ENCODE measurements at regions of chr11 and their contacts with region 1.

Region 1: DNA sequence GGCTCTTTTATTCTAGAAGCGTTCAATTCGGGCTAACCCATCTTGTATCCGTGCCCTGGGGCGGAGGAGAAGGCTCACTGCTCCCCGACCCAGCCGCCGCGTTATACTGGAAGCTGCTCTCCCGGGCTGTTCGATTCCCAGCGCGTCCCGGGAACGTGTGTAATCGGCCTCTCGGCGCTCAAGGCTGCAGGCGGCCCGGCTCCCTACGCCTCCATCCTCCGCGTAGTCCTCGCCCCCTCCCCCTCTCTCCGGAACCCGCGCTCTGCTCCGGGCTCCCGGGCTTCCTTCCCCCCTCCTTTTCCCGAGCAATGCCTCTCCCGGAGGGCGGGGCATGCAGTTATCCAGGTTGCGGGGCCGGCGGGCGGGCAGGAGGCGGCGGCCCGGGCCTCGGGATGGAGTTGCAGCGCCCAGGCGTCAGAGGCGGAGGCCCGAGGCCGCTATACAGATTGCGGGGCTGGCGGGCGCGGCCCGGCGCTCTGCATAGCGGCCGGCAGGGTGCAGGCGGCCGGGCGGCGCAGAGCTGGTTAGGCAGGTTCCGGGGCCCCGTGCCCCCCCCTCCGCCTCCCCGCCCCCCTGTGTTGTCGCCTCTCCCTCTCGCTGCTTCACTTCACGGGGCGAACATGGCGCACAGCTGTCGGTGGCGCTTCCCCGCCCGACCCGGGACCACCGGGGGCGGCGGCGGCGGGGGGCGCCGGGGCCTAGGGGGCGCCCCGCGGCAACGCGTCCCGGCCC is at the start of gene KMT2A:
- DNase-seq: peak; percentile 86 to 98
- H3K4me3 ChIP-seq: peak within 1 kb of the TSS; percentile 73 to 91
- H3K27ac ChIP-seq: peak within 1 kb of the TSS; percentile 95 to 96
- H3K4me1 ChIP-seq: peaks cover 3 to 18% of the 10 kb centered on the region in 2 donors
- H3K27me3 ChIP-seq: no peaks in the 10 kb centered on the region
- CTCF ChIP-seq: peak in 1 of 3 experiments; percentile 99
- total RNA-seq, gene KMT2A: 61.3 TPM

Region 2: DNA sequence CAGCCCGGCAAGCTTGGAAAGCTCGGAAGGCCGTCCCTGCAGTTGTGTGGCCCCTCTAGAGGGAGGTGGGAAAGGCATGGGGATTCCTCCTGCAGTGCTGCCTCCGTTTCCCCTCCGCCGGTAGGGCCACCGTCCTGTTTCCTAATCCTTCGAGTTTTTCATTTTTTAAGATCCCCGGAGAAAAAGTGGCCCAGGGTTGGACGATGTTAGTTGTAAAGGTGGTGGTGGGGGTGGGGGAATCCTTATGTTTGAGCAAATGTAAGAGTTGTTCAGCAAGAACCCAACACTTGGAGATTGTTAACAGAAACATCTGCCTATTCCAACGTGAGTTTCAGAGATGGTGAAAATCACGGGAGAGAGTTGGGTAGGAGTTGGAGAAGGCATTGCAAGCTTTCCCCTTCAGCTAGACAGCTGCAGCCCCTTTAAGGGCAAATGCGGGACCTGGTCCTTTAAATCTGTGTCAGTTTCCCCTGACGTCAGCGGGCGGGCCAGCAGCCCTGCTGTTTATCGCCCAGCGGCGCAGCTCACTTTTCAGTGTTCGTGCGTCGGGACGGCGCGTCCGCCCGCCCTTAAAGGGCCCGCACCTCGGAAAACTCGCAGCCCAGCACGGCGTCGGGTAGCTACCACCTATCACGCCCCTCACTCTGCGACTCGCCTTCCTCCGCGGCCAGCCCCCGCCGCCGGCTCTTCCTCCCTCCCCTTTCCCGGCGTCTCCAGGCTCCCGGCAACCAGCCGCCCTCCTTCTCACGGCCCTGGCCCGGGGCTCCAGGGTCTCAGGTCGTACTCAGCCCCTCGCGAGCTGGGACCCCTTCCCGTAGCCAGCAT is 1257.6 kb before region 1 on chr11 and contains the start of gene SIDT2:
- intact Hi-C with region 1: loop called (anchors 5 kb)
- DNase-seq: peak; percentile 79 to 97
- H3K4me3 ChIP-seq: peak within 1 kb of the TSS; percentile 84 to 97
- H3K27ac ChIP-seq: peak within 1 kb of the TSS; percentile 98 to 99
- H3K4me1 ChIP-seq: peaks cover 14 to 28% of the 10 kb centered on the region in 2 donors
- H3K27me3 ChIP-seq: no peaks in the 10 kb centered on the region
- CTCF ChIP-seq: peak in 1 of 3 experiments; percentile 7
- total RNA-seq, gene SIDT2: 45.4 TPM

Region 3: GRCh38 chr11:118380571-118380970 is 55.5 kb before region 1 on chr11:
- intact Hi-C with region 1: no loop called
- DNase-seq: no peak
- H3K4me3 ChIP-seq: no peak overlapping the region
- H3K27ac ChIP-seq: no peak overlapping the region
- H3K4me1 ChIP-seq: no peaks in the 10 kb centered on the region
- H3K27me3 ChIP-seq: no peaks in the 10 kb centered on the region
- CTCF ChIP-seq: no peak

Region 4: DNA sequence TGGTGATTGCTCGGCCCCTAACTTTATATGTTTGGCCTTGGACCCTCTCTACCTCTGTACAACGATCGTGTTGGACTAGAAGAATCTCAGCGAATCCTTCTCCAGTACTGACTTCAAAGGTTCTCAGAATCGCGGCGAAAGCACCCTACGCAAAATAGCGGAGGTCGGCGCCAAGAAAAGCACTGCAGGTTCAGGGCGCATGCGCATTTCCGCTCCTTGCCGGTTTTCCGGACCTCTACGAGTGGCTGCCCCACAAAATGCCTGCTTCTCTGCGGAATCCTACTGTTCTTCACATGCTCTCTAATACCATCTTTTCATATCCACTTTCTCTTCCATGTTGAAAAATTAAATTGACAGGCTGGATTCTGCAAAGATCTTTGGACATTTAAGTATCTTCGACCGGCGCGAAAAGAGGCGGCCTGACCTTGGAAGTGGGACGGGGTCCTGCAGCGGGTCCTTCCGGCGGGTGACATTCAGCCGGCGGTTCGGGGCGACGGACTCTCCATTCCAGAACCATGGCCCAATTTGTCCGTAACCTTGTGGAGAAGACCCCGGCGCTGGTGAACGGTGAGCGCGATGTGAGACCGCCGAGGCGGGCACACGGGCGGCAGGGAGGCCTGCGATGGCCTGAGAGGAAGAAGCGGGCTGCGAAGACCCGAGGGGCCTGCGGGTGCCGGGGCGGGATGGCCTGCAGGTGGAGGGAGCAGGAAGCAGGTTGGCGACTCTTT is 34.7 kb before region 1 on chr11 and contains the start of gene ATP5MG:
- intact Hi-C with region 1: loop called (anchors 1 kb)
- DNase-seq: peak; percentile 13 to 93
- H3K4me3 ChIP-seq: peak within 1 kb of the TSS; percentile 81 to 99
- H3K27ac ChIP-seq: peak within 1 kb of the TSS; percentile 69 to 84
- H3K4me1 ChIP-seq: peaks cover 8 to 20% of the 10 kb centered on the region in 2 donors
- H3K27me3 ChIP-seq: no peaks in the 10 kb centered on the region
- CTCF ChIP-seq: peak in 1 of 3 experiments; percentile 17
- total RNA-seq, gene ATP5MG: 23.7 TPM

Region 5: DNA sequence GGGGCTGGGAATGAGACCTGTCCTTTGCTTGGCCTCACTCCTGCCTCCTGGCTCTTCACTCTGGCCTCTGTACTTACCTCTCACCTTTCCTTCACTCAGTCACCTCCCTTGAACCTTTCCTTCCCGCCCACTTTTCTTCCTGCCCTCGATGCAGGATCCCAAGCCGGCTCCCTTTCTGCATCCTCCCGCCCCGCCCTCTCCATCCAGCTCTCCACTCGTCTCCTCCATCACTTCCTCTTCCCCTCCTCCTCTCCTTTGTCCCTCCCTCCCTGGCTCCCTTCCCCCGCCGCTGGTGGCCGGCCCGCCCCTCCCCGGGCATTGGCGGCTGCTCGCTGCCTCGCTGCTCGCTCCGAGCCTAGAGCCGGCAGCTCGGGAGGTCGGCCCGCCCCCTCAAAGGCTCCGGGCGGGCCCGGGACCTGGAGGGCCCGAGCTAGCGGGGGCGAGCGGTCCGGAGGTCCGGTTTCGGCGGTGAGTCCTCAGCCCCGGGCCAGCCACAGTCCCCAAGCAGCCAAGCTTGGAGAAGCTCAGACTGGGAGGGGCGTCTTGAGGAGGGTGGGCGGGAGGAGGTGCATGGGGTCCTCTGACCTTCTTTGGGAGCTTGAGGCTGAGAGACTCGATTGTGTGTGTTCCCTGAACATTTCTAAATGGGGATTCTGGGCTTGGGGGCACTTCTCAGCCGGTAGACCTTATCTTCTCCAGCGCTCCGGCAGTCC is 185.2 kb after region 1 on chr11:
- intact Hi-C with region 1: loop called (anchors 5 kb)
- DNase-seq: peak in 1 of 2 donors; percentile 95
- H3K4me3 ChIP-seq: peak overlapping the region; percentile 73
- H3K27ac ChIP-seq: peak overlapping the region; percentile 95 to 99
- H3K4me1 ChIP-seq: peaks cover 31 to 67% of the 10 kb centered on the region in 2 donors
- H3K27me3 ChIP-seq: no peaks in the 10 kb centered on the region
- CTCF ChIP-seq: no peak

Region 6: DNA sequence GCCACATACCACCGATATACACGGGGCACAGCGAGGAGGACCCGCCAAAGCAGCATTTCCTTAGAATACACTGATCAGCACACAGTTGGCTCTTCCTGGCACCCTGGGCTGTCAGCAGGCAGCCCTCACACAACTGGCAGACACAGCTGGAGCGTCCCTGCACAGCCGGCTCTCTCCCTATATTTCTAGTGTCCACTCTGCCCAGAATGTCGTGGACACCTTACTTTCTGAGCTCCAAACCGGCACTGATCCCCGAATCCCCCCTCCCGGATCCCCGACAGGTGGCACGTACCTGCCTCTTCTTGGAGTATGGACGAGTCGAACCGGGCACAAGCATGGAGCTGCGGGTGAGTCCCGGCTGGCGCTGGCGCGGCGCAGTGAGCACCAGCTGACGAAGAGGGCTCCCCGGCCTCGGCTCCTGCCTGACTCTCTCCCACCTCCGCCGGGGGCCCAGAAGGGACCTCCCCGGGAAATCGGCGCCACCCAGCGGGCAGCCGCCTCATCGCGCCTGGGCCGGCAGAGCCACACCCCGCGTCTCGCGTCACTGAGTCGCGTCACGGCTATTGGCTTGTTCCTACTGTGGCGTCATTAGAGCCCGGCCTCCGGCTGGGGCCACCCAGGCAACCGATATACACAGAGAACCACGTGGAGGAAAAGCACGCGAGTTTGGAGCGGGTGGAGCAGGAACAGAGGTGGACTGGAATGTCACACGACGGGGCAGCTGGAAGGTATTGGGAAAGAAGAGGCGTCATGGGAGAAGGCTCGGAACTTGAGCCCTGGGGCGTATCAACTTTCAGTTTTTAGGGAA is 945.3 kb after region 1 on chr11 and contains the start of gene USP2:
- intact Hi-C with region 1: loop called (anchors 5 kb)
- DNase-seq: peak; percentile 94 to 99
- H3K4me3 ChIP-seq: peak within 1 kb of the TSS; percentile 59 to 64
- H3K27ac ChIP-seq: peak within 1 kb of the TSS; percentile 31 to 37
- H3K4me1 ChIP-seq: peaks cover 0 to 16% of the 10 kb centered on the region in 2 donors
- H3K27me3 ChIP-seq: no peaks in the 10 kb centered on the region
- CTCF ChIP-seq: peak; percentile 88 to 92 (median 90)
- total RNA-seq, gene USP2: not detected

Measured in ascending aorta (tissue), 2 donors.